Mucosa of descending colon (tissue), 3 donors: ENCODE measurements at regions of chr3 and their contacts with region 1.

Region 1: GRCh38 chr3:43540624-43541023 is 81.2 kb downstream of the ANO10 start:
- DNase-seq: no peak
- ATAC-seq: no peak
- H3K4me3 ChIP-seq: no peak overlapping the region
- H3K4me1 ChIP-seq: no peaks in the 10 kb centered on the region
- CTCF ChIP-seq: no peak

Region 2: DNA sequence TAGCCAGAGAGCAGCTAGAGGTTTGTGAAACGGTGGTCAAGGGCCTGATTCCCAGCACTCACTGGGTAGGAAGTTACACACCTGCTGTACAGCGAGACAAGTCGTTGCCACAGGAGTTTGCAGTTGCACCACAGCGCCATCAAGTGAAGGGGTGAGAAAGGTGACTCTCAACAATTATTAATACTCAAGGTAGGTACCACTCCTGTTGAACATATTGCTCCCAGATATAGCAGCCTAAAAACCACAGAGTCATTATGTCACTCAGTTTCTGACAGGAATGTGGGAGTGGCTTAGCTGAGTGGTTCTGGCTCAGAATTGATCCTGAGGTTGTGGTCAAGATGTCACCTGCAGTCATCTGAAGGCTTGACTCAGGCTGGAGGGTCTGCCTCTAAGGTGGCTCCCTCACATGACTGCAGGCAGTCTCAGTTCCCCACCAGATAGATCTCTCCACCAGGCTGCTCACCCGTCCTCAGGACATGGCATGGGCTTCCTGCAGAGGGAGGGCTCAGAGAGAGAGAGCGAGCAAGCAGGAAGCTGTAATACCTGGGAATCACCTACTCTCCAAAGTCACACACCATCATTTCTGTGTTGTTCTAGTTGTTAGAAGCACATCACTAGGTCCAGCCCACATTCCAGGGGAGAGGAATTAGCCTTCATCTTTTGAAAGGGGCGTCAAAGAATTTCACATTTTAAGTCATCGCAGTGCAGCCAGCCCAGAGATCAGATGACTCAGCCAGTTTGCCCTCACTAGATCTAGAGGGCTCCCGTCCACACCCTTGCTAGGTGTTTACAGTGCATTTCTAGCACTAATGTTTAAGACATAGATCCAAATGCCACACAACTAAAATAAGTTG is 98.2 kb after region 1 on chr3:
- intact Hi-C with region 1: loop called in 1 of 2 experiments (anchors 10 kb)
- DNase-seq: peak in 2 of 3 donors; percentile 75 to 79
- ATAC-seq: peak; percentile 97
- H3K4me3 ChIP-seq: no peak overlapping the region
- H3K4me1 ChIP-seq: peaks cover 6% of the 10 kb centered on the region
- CTCF ChIP-seq: peak; percentile 33

Region 3: DNA sequence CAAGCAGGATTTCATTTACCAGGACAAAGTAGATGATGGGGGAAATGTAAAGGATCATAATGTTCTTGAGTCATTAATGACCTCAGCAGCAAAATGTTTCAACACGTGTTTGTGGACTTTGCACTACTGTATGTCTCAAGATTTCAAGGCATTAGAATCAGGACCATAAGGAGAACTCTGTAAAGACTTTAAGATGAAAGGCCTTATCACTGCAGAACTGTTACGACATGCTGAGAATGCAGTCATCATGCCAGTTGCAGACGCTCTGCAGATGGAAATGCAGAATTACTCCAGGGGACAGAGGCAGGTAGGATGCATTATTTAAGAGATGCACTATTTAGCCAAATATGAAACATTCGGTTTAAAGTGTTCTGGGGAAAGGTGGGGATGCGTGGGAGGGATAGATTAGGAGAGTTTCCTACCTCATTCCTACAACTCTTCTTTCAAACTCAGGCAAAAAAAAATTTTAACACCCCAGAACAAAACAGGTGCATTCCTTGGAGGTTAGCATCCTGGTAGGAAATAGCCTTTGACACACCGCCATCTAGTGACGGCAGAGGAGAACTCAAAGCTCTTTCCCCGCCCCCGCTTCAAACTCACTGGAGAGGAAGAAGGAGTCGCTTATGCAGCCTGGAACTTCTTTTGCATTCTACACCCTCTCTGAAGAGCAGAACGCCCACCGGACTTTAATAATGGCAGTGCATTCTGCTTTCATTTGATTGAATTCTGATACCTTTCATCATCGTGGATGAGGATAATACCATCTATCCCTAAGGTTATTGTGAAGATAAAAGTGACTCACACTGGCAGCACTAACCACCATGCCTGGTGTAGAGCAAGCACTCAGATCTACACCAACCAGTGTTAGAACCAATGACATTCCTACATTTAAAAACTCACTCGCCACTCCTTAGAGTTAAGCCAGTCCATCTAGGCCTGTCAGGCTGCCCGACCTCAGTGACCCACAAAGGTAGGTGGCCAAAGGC is 658.0 kb after region 1 on chr3:
- intact Hi-C with region 1: loop called (anchors 10 kb)
- DNase-seq: peak in 2 of 3 donors; percentile 57 to 82
- ATAC-seq: peak; percentile 90
- H3K4me3 ChIP-seq: no peak overlapping the region
- H3K4me1 ChIP-seq: no peaks in the 10 kb centered on the region
- CTCF ChIP-seq: peak; percentile 63